ENCODE measurements at regions of chr9 and their contacts with region 1.

Region 1: DNA sequence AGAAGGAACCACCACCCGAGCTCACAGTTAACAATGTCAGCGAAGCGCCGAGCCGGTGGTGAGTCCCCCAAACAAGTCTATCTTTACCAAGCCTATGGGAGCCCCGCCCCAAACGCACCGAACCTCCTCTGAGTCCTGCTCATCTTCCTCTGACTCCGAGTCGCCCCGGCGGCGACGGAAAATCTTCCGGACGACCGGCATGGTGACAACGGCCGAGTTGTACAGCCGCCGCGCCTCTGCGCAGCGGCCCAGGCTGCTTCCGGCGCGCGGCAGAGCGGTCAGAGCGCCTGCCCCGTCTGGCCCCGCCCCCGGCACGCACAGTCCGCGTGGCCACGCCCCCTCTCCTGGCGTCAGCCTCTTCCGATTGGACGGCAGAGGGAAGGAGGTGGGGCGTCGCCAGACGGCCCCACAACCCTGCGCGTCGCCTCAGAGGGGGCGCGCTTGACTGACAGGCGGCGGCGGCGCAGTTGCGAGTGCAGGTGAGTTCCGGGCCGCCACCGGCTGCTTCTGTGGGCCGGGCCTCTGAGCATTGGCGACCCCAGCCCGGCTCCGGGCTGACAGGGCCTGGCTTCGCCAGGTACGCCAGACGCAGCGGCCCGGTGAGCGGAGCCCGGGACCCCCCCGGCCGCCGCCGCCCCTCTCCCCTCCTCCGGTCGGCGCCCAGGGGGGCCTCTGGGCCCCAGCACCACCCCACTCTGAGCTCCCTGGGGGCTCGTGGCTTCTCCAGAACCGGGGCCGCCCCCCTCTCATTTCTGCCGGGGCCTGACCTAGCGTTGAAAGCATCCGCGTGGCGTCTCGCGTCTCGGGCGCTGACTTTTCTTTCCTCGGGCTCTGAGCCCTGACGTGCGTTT is at the starts of genes C9orf78 and USP20:
- DNase-seq: peak; percentile 96
- H3K4me3 ChIP-seq: peak within 1 kb of the TSS; percentile 60 to 82 (median 65)
- H3K27ac ChIP-seq: peak within 1 kb of the TSS; percentile 18
- H3K4me1 ChIP-seq: peaks cover 15% of the 10 kb centered on the region
- H3K27me3 ChIP-seq: no peaks in the 10 kb centered on the region
- CTCF ChIP-seq: no peak
- POLR2A ChIP-seq: peak; percentile 97
- total RNA-seq, gene C9orf78: 34.6 and 34.7 TPM in 2 replicates
- total RNA-seq, gene USP20: 13.4 and 17.4 TPM in 2 replicates

Region 2: DNA sequence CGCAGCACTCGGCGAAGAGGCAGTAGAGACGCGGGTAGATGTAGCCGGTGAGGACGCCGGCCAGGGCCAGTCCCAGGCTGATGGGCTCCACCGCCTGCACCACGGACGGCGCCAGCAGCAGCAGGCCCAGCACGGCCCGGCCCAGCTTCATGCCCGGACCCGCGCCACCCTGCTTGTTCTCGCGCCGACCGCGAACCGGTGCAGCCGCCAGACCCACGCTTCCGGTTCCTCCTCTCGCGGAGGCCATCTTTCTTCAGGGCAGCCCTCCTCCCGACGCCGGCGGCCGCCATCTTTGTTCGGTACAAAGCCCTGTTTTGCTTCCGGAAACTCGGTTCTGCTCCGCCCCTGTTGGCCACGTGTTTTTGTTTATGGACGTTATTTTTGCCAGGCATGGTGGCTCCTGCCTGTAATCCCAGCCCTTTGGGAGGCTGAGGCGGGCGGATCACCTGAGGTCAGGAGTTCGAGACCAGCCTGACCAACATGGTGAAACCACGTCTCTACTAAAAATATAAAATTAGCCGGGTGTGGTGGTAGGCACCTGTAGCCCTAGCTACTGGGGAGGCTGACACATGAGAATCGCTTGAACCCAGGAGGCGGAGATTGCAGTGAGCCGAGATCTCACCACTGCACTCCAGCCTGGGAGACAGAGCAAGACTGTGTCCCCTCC is 11.2 kb before region 1 on chr9 and contains the start of gene TOR1A:
- CTCF ChIA-PET with region 1: interaction called, 3 read pairs
- POLR2A ChIA-PET with region 1: no interaction called
- dilution Hi-C with region 1: no loop called
- intact Hi-C with region 1: loop called (anchors 1 kb)
- DNase-seq: peak; percentile 95
- H3K4me3 ChIP-seq: peak within 1 kb of the TSS; percentile 31 to 74 (median 49)
- H3K27ac ChIP-seq: no peak within 1 kb of the TSS
- H3K4me1 ChIP-seq: peaks cover 7% of the 10 kb centered on the region
- H3K27me3 ChIP-seq: no peaks in the 10 kb centered on the region
- CTCF ChIP-seq: no peak
- POLR2A ChIP-seq: peak; percentile 90
- total RNA-seq, gene TOR1A: 56.6 and 57.8 TPM in 2 replicates

Region 3: GRCh38 chr9:129868916-129869486 is 33.8 kb after region 1 on chr9:
- CTCF ChIA-PET with region 1: no interaction called
- POLR2A ChIA-PET with region 1: no interaction called
- dilution Hi-C with region 1: no loop called
- intact Hi-C with region 1: no loop called
- DNase-seq: no peak
- H3K4me3 ChIP-seq: no peak overlapping the region
- H3K27ac ChIP-seq: no peak overlapping the region
- H3K4me1 ChIP-seq: no peaks in the 10 kb centered on the region
- H3K27me3 ChIP-seq: no peaks in the 10 kb centered on the region
- CTCF ChIP-seq: no peak
- POLR2A ChIP-seq: no peak

Region 4: DNA sequence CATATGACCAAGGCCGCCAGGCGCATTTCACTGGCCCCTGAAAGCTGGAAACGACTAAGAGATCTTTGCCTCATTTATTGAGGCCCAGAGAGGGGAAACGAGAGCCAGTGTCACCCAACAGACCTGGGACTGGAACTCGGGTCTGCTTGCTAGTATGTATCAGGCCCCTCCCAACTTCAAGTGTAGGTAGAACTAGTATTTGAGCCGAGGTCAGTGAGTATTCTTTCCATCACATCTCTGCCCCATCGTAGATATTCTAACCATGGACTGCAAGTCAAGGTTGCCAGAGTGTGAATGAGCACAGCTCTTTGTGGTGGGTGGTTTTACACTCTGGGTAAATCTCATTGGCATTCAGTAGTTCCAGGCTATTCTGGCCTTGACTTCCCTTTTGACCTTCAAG is 260.6 kb after region 1 on chr9:
- CTCF ChIA-PET with region 1: interaction called, 3 read pairs
- POLR2A ChIA-PET with region 1: no interaction called
- dilution Hi-C with region 1: no loop called
- intact Hi-C with region 1: loop called (anchors 5 kb)
- DNase-seq: no peak
- H3K4me3 ChIP-seq: no peak overlapping the region
- H3K27ac ChIP-seq: no peak overlapping the region
- H3K4me1 ChIP-seq: peaks cover 4% of the 10 kb centered on the region
- H3K27me3 ChIP-seq: no peaks in the 10 kb centered on the region
- CTCF ChIP-seq: no peak
- POLR2A ChIP-seq: no peak